ENCODE measurements at regions of chr11 and their contacts with region 1.

Region 1: GRCh38 chr11:8225589-8226036 is 38.1 kb downstream of the LMO1 start:
- DNase-seq: peak; percentile 67 to 82
- ATAC-seq: peak; percentile 74 to 91 (median 76)
- H3K4me3 ChIP-seq: no peak overlapping the region
- H3K27ac ChIP-seq: no peak overlapping the region
- H3K4me1 ChIP-seq: no peaks in the 10 kb centered on the region
- H3K27me3 ChIP-seq: no peaks in the 10 kb centered on the region
- CTCF ChIP-seq: peak; percentile 98

Region 2: DNA sequence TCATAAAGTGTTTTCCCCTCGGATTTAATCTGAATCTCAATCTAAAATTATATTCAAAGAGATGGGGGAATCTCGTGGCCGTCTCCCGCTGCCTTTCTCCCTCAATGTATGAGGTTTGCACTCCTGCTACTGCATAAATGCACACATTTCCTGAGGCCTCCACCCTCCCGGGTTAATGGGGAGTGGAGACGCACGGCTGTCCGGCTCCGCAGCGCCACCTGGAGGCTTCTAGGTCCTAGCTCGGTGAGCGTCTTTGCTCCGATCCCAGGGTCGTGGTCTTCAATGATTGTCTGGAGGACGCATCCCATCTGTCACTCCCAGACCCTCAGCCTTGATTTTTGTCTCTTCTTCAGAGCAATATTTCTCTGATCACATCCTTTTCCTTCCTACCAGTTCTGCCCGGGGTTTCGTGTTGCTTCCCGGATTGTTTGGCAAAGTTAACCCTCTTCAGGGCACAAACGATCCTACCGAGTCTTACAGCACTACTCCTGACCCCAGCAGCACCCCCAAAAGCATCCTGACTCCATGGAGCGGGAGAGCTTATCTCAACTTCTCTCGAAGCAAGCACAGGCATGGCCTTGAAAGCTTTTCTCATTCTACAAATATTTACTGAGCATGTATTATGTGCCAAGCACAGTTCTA is 38.3 kb after region 1 on chr11 and contains the start of gene LMO1:
- intact Hi-C with region 1: loop called (anchors 1 to 2 kb)
- DNase-seq: peak; percentile 83 to 90
- ATAC-seq: peak; percentile 72 to 81 (median 76)
- H3K4me3 ChIP-seq: peak within 1 kb of the TSS; percentile 74
- H3K27ac ChIP-seq: peak within 1 kb of the TSS; percentile 73
- H3K4me1 ChIP-seq: peaks cover 19% of the 10 kb centered on the region
- H3K27me3 ChIP-seq: peaks cover 0 to 40% (median 16%) of the 10 kb centered on the region in 3 donors
- CTCF ChIP-seq: peak; percentile 89
- total RNA-seq, gene LMO1: 3.2 to 9.3 (median 4.4) TPM

Region 3: GRCh38 chr11:8318336-8318935 is 92.8 kb after region 1 on chr11:
- intact Hi-C with region 1: loop called (anchors 2 to 5 kb)
- DNase-seq: no peak
- ATAC-seq: peak in 3 of 4 donors; percentile 48 to 64 (median 61)
- H3K4me3 ChIP-seq: no peak overlapping the region
- H3K27ac ChIP-seq: no peak overlapping the region
- H3K4me1 ChIP-seq: no peaks in the 10 kb centered on the region
- H3K27me3 ChIP-seq: peaks cover 0 to 15% (median 2%) of the 10 kb centered on the region in 3 donors
- CTCF ChIP-seq: peak; percentile 41

Region 4: GRCh38 chr11:8566613-8567210 is 341.1 kb after region 1 on chr11:
- intact Hi-C with region 1: loop called (anchors 2 to 5 kb)
- DNase-seq: no peak
- ATAC-seq: peak in 2 of 4 donors; percentile 42 to 75
- H3K4me3 ChIP-seq: no peak overlapping the region
- H3K27ac ChIP-seq: no peak overlapping the region
- H3K4me1 ChIP-seq: no peaks in the 10 kb centered on the region
- H3K27me3 ChIP-seq: peaks cover 0 to 1% (median 0%) of the 10 kb centered on the region in 3 donors
- CTCF ChIP-seq: peak; percentile 78

Measured in psoas muscle (tissue), 8 donors.